ENCODE measurements at regions of chr15 and their contacts with region 1.

Region 1: DNA sequence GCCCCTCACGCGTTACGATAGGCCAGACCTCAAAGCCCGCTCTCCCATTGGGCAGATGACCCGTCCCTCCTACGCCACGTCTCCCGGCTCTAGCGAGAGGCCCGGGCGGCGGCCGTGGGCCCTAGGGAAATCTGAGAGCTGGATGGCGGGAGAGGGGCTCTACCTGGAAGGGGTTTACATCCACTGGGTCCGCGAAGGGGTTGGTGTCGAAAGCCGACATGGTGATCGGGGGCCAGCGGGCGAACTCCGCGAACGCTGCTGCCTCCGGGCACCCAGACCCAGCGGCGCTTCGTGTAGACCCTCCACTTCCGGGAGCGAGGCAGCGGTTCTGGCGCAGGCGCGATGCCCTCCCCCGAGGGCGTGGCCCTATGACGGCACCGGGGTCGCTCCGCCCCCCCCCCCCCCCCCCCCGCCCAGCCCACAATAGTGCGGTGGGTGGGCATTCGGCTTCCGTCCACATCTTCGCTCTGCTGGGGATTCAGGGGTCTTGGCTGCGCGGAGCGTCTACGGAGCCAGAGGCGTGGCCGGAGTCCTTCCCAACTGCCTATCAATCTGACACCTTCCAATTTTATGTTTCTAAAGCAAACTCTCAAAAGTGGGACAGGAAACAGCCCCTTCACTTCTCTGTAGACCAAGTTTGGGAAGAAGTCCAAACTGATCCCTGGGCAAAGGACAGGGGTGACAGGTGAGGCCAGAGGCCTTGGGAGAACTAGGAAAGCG is at the start of gene SCAMP2:
- DNase-seq: peak; percentile 85
- ATAC-seq: peak; percentile 92
- H3K4me3 ChIP-seq: peak within 1 kb of the TSS; percentile 93
- H3K27ac ChIP-seq: peak within 1 kb of the TSS; percentile 94
- H3K4me1 ChIP-seq: peaks cover 28% of the 10 kb centered on the region
- H3K27me3 ChIP-seq: no peaks in the 10 kb centered on the region
- CTCF ChIP-seq: no peak
- EP300 ChIP-seq: no peak
- POLR2A ChIP-seq: peak; percentile 95
- RAD21 ChIP-seq: no peak
- polyA plus RNA-seq, gene SCAMP2: 10.9 to 22.5 TPM

Region 2: GRCh38 chr15:74781431-74782258 is 91.6 kb before region 1 on chr15 and contains the start of gene CSK:
- CTCF ChIA-PET with region 1: interaction called, 5 read pairs
- POLR2A ChIA-PET with region 1: interaction called, 12 read pairs
- RAD21 ChIA-PET with region 1: interaction called, 15 read pairs
- SMC1A ChIA-PET with region 1: interaction called, 23 read pairs
- in situ Hi-C with region 1: no loop called
- intact Hi-C with region 1: no loop called
- DNase-seq: no peak
- ATAC-seq: no peak; the same call in 2 of the 3 replicates
- H3K4me3 ChIP-seq: peak within 1 kb of the TSS; percentile 94
- H3K27ac ChIP-seq: peak within 1 kb of the TSS; percentile 96
- H3K4me1 ChIP-seq: peaks cover 59% of the 10 kb centered on the region
- H3K27me3 ChIP-seq: no peaks in the 10 kb centered on the region
- CTCF ChIP-seq: peak; percentile 52 to 62 (median 62); a peak in 5 of 6 replicates
- EP300 ChIP-seq: peak in 1 of 2 experiments; percentile 6; a peak in 1 of 4 replicates
- POLR2A ChIP-seq: peak; percentile 78
- RAD21 ChIP-seq: peak; percentile 28; the same call in 1 of the 2 replicates
- polyA plus RNA-seq, gene CSK: 3.4 to 11.5 TPM

Region 3: GRCh38 chr15:74829991-74830390 is 43.2 kb before region 1 on chr15:
- CTCF ChIA-PET with region 1: no interaction called
- POLR2A ChIA-PET with region 1: no interaction called
- RAD21 ChIA-PET with region 1: no interaction called
- SMC1A ChIA-PET with region 1: no interaction called
- in situ Hi-C with region 1: no loop called
- intact Hi-C with region 1: no loop called
- DNase-seq: no peak
- ATAC-seq: no peak
- H3K4me3 ChIP-seq: no peak overlapping the region
- H3K27ac ChIP-seq: no peak overlapping the region
- H3K4me1 ChIP-seq: no peaks in the 10 kb centered on the region
- H3K27me3 ChIP-seq: peaks cover 0 to 16% of the 10 kb centered on the region in 2 experiments; a peak in 3 of 4 replicates
- CTCF ChIP-seq: no peak
- EP300 ChIP-seq: no peak
- POLR2A ChIP-seq: no peak
- RAD21 ChIP-seq: no peak

Region 4: GRCh38 chr15:74842581-74843444 is 30.4 kb before region 1 on chr15 and contains the start of gene ULK3:
- CTCF ChIA-PET with region 1: interaction called, 7 read pairs
- POLR2A ChIA-PET with region 1: interaction called, 10 read pairs
- RAD21 ChIA-PET with region 1: interaction called, 10 read pairs
- SMC1A ChIA-PET with region 1: interaction called, 17 read pairs
- in situ Hi-C with region 1: no loop called
- intact Hi-C with region 1: loop called (anchors 2 kb)
- DNase-seq: no peak
- ATAC-seq: peak; percentile 95
- H3K4me3 ChIP-seq: peak within 1 kb of the TSS; percentile 86
- H3K27ac ChIP-seq: peak within 1 kb of the TSS; percentile 80
- H3K4me1 ChIP-seq: peaks cover 13% of the 10 kb centered on the region
- H3K27me3 ChIP-seq: no peaks in the 10 kb centered on the region
- CTCF ChIP-seq: peak; percentile 45 to 60 (median 50); a peak in 5 of 6 replicates
- EP300 ChIP-seq: no peak
- POLR2A ChIP-seq: peak; percentile 75
- RAD21 ChIP-seq: peak; percentile 26
- polyA plus RNA-seq, gene ULK3: 0.64 to 1.4 TPM

Region 5: DNA sequence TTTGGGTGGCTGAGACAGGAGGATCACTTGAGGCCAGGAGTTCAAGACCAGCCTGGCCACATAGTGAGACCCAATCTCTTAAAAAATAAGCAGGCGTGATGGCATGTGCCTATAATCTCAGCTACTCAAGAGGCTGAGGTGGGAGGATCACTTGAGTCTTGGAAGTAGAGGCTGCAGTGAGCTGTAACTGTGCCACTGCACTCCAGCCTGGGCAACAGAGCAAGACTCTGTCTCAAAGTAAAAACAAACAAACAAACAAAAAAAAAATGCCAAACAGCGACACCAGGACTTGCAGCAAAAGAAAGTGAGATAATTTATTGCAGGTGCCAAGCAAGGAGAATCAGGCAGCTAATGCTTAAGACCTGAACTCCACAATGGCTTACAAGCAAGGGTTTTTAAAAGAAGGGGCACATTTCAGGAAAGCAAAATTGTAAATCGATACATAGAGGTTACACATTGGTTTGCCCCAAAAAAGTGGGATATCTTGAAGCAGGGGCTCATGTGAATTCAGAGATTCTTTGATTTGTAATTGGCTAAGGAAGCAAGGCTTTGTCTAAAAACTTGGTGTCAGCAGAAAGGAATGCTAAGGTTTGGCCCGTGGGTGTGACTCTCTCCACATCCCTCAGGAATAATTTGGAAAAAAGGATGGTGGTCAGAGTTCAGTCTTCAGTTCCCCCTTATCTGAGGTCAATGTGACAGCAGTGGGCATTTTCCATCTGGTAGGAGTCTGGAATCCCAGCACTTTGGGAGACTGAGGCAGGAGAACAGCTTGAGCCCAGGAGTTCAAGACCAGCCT is 11.4 kb after region 1 on chr15:
- CTCF ChIA-PET with region 1: interaction called, 19 read pairs
- POLR2A ChIA-PET with region 1: interaction called, 32 read pairs
- RAD21 ChIA-PET with region 1: interaction called, 29 read pairs
- SMC1A ChIA-PET with region 1: interaction called, 65 read pairs
- in situ Hi-C with region 1: no loop called
- intact Hi-C with region 1: no loop called
- DNase-seq: no peak
- ATAC-seq: no peak
- H3K4me3 ChIP-seq: no peak overlapping the region
- H3K27ac ChIP-seq: no peak overlapping the region
- H3K4me1 ChIP-seq: peaks cover 17% of the 10 kb centered on the region
- H3K27me3 ChIP-seq: no peaks in the 10 kb centered on the region
- CTCF ChIP-seq: no peak
- EP300 ChIP-seq: no peak
- POLR2A ChIP-seq: no peak
- RAD21 ChIP-seq: no peak

Region 6: GRCh38 chr15:75380773-75381172 is 507.6 kb after region 1 on chr15:
- CTCF ChIA-PET with region 1: no interaction called
- POLR2A ChIA-PET with region 1: interaction called, 10 read pairs
- RAD21 ChIA-PET with region 1: no interaction called
- SMC1A ChIA-PET with region 1: no interaction called
- in situ Hi-C with region 1: no loop called
- intact Hi-C with region 1: no loop called
- DNase-seq: no peak
- ATAC-seq: no peak
- H3K4me3 ChIP-seq: no peak overlapping the region
- H3K27ac ChIP-seq: no peak overlapping the region
- H3K4me1 ChIP-seq: no peaks in the 10 kb centered on the region
- H3K27me3 ChIP-seq: no peaks in the 10 kb centered on the region
- CTCF ChIP-seq: no peak
- EP300 ChIP-seq: no peak
- POLR2A ChIP-seq: no peak
- RAD21 ChIP-seq: no peak

Measured in GM12878 (cell line).